CD4-positive, alpha-beta T cell (primary cell): ENCODE measurements at regions of chr4 and their contacts with region 1.

Region 1: GRCh38 chr4:75973766-75974165 is 17.0 kb downstream of the SDAD1 start:
- DNase-seq: no peak
- ATAC-seq: no peak
- H3K4me3 ChIP-seq: no peak overlapping the region
- H3K4me3 Mint-ChIP-seq: no peak overlapping the region
- H3K27ac ChIP-seq: no peak overlapping the region
- H3K27ac Mint-ChIP-seq: no peak overlapping the region
- H3K4me1 ChIP-seq: no peaks in the 10 kb centered on the region
- H3K4me1 Mint-ChIP-seq: no peaks in the 10 kb centered on the region
- H3K27me3 ChIP-seq: no peaks in the 10 kb centered on the region
- H3K27me3 Mint-ChIP-seq: no peaks in the 10 kb centered on the region
- CTCF ChIP-seq: no peak

Region 2: GRCh38 chr4:75948822-75949444 is 24.8 kb before region 1 on chr4:
- CTCF ChIA-PET with region 1: no interaction called
- POLR2A ChIA-PET with region 1: no interaction called
- intact Hi-C with region 1: loop called in 1 of 2 experiments (anchors 2 kb)
- DNase-seq: no peak
- ATAC-seq: no peak
- H3K4me3 ChIP-seq: no peak overlapping the region
- H3K4me3 Mint-ChIP-seq: no peak overlapping the region
- H3K27ac ChIP-seq: no peak overlapping the region
- H3K27ac Mint-ChIP-seq: no peak overlapping the region
- H3K4me1 ChIP-seq: no peaks in the 10 kb centered on the region
- H3K4me1 Mint-ChIP-seq: no peaks in the 10 kb centered on the region
- H3K27me3 ChIP-seq: no peaks in the 10 kb centered on the region
- H3K27me3 Mint-ChIP-seq: no peaks in the 10 kb centered on the region
- CTCF ChIP-seq: no peak